ENCODE measurements at regions of chr13 and their contacts with region 1.

Region 1: DNA sequence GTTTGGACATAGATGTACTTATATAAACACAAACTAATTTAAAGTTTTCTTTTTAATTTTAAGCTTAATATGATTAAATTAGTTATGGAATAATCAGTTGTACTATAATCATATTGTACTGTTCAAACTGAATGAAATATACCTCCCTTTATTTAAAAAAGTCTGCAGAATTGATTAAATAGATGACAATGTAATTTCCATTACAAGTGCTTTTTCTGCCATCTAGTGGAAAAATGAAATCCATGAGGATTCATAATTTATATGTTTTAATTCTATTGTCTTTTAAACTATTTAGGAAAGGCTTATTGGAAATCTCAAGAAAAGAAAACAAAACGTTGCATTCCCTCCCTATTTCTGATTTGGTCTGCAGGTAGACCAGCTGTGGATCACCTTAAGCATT is 30.9 kb downstream of the MZT1 start:
- DNase-seq: peak; percentile 11
- H3K4me3 ChIP-seq: no peak overlapping the region
- H3K27ac ChIP-seq: no peak overlapping the region
- H3K4me1 ChIP-seq: no peaks in the 10 kb centered on the region
- H3K27me3 ChIP-seq: no peaks in the 10 kb centered on the region
- CTCF ChIP-seq: peak; percentile 80
- EP300 ChIP-seq: no peak
- RAD21 ChIP-seq: peak; percentile 73

Region 2: GRCh38 chr13:72651144-72651543 is 45.4 kb before region 1 on chr13:
- CTCF ChIA-PET with region 1: interaction called, 10 read pairs
- POLR2A ChIA-PET with region 1: no interaction called
- DNase-seq: peak; percentile 32
- H3K4me3 ChIP-seq: no peak overlapping the region; a peak in 1 of 4 replicates
- H3K27ac ChIP-seq: no peak overlapping the region
- H3K4me1 ChIP-seq: no peaks in the 10 kb centered on the region; a peak in 1 of 4 replicates
- H3K27me3 ChIP-seq: no peaks in the 10 kb centered on the region
- CTCF ChIP-seq: peak; percentile 44; the same call in 1 of the 2 replicates
- EP300 ChIP-seq: no peak
- RAD21 ChIP-seq: peak; percentile 61

Region 3: GRCh38 chr13:73090116-73090811 is 393.7 kb after region 1 on chr13:
- CTCF ChIA-PET with region 1: no interaction called
- POLR2A ChIA-PET with region 1: no interaction called
- DNase-seq: no peak
- H3K4me3 ChIP-seq: no peak overlapping the region
- H3K27ac ChIP-seq: peak overlapping the region in 1 of 2 experiments; percentile 56; a peak in 2 of 4 replicates
- H3K4me1 ChIP-seq: peaks cover 0 to 5% of the 10 kb centered on the region in 2 experiments; a peak in 1 of 4 replicates
- H3K27me3 ChIP-seq: no peaks in the 10 kb centered on the region
- CTCF ChIP-seq: no peak
- EP300 ChIP-seq: peak in 1 of 2 experiments; percentile 29; a peak in 1 of 4 replicates
- RAD21 ChIP-seq: no peak

Measured in SK-N-SH (cell line).